Activated T-helper 1 cell treated with anti-CD3 and anti-CD28 coated beads, Interleukin-12 subunit alpha, Interleukin-12 subunit beta, Interleukin-2, Interleukin-4 antibody, amounts not matched to agents 30 ng/mL and 10 ng/mL and 1 ng/mL, durations not matched to agents 14 hours and 24 hours and 36 hours (primary cell): ENCODE measurements at regions of chr7 and their contacts with region 1.

Region 1: DNA sequence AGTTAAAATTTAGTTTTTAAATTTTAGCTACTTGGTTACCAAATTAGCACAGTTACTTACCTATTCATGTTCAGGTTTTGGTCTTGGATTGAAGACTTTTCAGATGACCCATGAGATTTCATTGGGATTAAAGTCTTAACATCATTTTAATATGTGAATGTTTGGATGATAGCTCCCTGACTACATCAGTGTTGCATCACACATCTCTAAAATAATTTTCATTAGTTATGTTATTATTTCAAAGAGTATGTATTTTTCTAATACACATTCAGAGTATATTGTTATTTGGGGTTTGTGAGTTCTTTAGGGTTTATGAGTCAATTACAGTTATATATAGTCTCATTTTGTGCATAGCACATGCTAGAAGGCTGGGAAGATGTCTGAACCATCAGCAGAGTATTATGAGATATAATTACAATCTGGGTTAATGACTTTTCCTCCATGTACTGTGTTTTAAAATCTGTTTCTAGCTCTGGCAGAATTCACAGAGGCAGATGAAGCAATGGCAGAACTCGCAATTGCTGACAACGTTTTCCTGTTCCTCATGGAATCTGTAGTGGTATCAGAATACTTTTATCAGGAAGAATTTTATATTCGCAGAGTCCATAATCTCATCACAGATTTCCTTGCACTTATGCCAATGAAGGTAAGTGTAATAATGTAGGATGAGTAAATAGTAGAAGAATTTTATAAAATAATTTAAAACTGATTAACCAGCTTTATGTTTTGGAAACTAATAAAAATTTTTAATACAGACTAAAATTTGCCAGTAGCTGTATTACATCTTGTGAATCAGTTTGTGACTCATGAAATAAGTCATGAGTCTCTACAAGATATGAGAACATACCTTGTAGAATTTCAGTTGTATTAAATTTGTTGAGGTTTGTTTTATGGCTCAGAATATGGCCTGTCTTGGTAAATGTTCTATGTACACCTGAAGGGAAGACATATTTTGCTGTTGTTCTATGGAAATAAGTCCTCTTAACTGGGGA is 26.9 kb downstream of the NUP205 start:
- DNase-seq: no peak
- H3K4me3 Mint-ChIP-seq: no peak overlapping the region
- H3K27ac Mint-ChIP-seq: no peak overlapping the region
- H3K4me1 Mint-ChIP-seq: no peaks in the 10 kb centered on the region
- H3K27me3 Mint-ChIP-seq: no peaks in the 10 kb centered on the region

Region 2: DNA sequence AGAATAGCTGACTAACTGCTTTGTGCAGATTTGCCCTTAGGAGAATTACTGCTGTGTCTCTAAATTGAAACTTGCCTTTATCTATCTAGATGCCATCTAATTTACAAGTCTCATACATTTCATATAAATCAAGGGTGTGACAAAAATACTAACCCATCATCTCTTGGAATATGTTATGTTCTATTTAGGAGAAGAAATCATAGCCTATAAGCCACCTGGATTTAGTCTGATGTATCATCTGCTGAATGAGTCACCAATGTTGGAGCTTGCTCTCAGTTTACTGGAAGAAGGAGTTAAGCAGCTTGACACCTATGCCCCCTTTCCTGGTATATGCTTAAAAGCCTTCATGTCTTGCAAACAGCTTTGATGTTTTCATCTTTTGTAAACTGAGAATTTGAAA is 16.5 kb after region 1 on chr7:
- intact Hi-C with region 1: loop called (anchors 2 kb)
- DNase-seq: no peak
- H3K4me3 Mint-ChIP-seq: no peak overlapping the region
- H3K27ac Mint-ChIP-seq: no peak overlapping the region
- H3K4me1 Mint-ChIP-seq: no peaks in the 10 kb centered on the region
- H3K27me3 Mint-ChIP-seq: no peaks in the 10 kb centered on the region